Activated T-helper 1 cell treated with anti-CD3 and anti-CD28 coated beads, Interleukin-12 subunit alpha, Interleukin-12 subunit beta, Interleukin-2, Interleukin-4 antibody, amounts not matched to agents 30 ng/mL and 10 ng/mL and 1 ng/mL, durations not matched to agents 14 hours and 24 hours and 36 hours (primary cell): ENCODE measurements at regions of chr7 and their contacts with region 1.

Region 1: DNA sequence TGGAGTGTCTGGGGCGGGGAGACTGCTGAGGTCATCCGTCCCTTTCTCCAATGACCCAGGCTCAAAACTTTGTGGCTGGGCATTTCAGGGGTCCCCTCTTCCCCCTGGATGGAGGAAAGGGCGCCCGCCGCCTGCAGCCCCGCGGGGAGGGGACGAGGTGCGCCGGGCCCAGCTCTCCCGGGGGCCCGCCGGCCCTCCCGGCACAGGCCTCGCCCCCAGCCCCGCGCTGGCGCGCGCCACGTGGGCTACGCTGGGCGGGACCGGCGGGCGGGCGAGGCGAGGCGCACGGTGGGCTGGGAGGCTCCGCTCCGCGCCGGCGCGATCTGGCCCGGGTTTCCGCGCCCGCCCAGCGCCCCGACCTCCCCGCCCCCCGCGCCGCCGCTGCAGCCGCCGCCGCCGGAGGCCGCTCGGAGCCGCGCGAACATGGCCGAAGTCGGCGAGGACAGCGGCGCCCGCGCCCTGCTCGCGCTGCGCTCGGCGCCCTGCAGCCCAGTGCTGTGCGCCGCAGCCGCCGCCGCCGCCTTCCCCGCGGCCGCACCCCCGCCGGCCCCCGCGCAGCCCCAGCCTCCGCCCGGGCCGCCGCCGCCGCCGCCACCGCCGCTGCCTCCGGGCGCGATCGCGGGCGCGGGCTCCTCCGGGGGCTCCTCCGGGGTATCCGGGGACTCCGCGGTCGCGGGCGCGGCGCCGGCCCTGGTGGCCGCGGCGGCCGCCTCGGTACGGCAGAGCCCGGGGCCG is at the start of gene FOXK1:
- DNase-seq: peak; percentile 75
- H3K4me3 Mint-ChIP-seq: peak within 1 kb of the TSS; percentile 99
- H3K27ac Mint-ChIP-seq: peak within 1 kb of the TSS; percentile 99
- H3K4me1 Mint-ChIP-seq: peaks cover 28% of the 10 kb centered on the region
- H3K27me3 Mint-ChIP-seq: peaks cover 2% of the 10 kb centered on the region
- total RNA-seq, gene FOXK1: 37.7 and 37.9 TPM in 2 replicates

Region 2: DNA sequence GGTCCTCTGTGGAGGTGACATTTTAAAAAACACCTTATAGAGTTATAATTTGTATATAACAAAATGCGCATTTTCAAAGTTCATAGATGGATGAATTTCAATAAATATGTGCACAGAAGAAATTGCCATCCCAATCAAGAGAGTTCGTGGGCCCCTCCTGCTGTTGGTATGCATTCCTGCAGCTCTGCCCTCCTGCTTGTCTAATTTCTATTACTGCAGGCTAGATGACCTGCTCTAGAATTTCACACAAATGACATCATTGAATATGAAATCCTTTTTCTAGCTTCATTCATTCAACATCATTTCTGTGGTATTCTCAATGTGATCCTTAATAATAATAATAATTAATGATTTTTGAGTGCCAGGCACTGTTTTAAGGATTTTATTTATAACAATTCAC is 1032.8 kb before region 1 on chr7:
- intact Hi-C with region 1: no loop called
- DNase-seq: no peak
- H3K4me3 Mint-ChIP-seq: no peak overlapping the region
- H3K27ac Mint-ChIP-seq: no peak overlapping the region
- H3K4me1 Mint-ChIP-seq: no peaks in the 10 kb centered on the region
- H3K27me3 Mint-ChIP-seq: peaks cover 2% of the 10 kb centered on the region

Region 3: GRCh38 chr7:4610768-4611467 is 71.1 kb before region 1 on chr7:
- intact Hi-C with region 1: loop called (anchors 1 kb)
- DNase-seq: peak; percentile 40
- H3K4me3 Mint-ChIP-seq: no peak overlapping the region
- H3K27ac Mint-ChIP-seq: no peak overlapping the region
- H3K4me1 Mint-ChIP-seq: peaks cover 17% of the 10 kb centered on the region
- H3K27me3 Mint-ChIP-seq: no peaks in the 10 kb centered on the region

Region 4: GRCh38 chr7:4725014-4725849 is 43.2 kb after region 1 on chr7:
- intact Hi-C with region 1: loop called (anchors 1 kb)
- DNase-seq: peak; percentile 64
- H3K4me3 Mint-ChIP-seq: peak overlapping the region; percentile 87
- H3K27ac Mint-ChIP-seq: peak overlapping the region; percentile 90
- H3K4me1 Mint-ChIP-seq: peaks cover 24% of the 10 kb centered on the region
- H3K27me3 Mint-ChIP-seq: no peaks in the 10 kb centered on the region

Region 5: DNA sequence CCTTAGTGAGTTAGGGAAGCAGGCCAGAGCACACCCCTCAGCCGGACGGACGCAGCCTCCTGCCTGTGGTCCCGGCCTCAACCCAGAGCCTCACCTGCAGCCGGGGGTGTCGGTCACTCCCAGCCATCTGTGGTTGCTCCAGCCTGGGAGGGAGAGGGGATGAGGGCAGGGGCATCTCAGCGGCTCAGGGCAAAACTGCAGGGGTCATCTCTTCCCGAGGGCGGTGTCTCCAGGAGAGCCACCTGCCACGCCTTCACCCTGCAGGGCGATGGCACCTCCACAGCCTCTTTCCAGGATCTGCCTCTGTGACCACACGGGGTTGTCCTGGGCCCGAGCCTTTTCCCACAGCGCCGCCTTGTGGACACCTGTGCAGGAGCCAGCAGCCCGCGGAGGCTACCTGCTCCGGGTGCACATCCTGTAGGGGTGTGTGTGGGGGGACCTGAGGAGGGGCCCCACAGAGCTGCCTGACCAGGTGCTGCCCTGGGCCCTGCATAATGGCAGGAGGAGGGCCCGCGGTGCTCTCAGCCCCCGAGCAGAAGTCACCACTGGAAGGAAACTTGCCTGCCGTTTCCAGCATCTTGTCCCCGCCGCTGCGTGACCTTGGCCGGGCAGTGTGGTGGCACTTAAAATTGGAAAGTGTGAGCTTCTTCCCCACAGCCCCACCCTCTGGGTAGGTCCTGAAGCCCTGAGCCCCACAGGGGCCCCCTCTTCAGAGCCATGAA is 71.8 kb after region 1 on chr7:
- intact Hi-C with region 1: loop called (anchors 1 kb)
- DNase-seq: peak; percentile 73
- H3K4me3 Mint-ChIP-seq: no peak overlapping the region
- H3K27ac Mint-ChIP-seq: no peak overlapping the region
- H3K4me1 Mint-ChIP-seq: peaks cover 8% of the 10 kb centered on the region
- H3K27me3 Mint-ChIP-seq: no peaks in the 10 kb centered on the region

Region 6: GRCh38 chr7:5045558-5046396 is 363.7 kb after region 1 on chr7 and contains the start of gene RBAK:
- intact Hi-C with region 1: loop called (anchors 5 kb)
- DNase-seq: peak; percentile 87
- H3K4me3 Mint-ChIP-seq: peak within 1 kb of the TSS; percentile 89
- H3K27ac Mint-ChIP-seq: peak within 1 kb of the TSS; percentile 88
- H3K4me1 Mint-ChIP-seq: peaks cover 24% of the 10 kb centered on the region
- H3K27me3 Mint-ChIP-seq: no peaks in the 10 kb centered on the region
- total RNA-seq, gene RBAK: 12.5 and 13.0 TPM in 2 replicates